Left ventricle myocardium inferior (tissue), 1 donor: ENCODE measurements at regions of chr14 and their contacts with region 1.

Region 1: GRCh38 chr14:102314242-102315011 is 5.1 kb upstream of the ZNF839 start:
- DNase-seq: peak; percentile 87
- H3K4me3 ChIP-seq: peak overlapping the region; percentile 68
- H3K27ac ChIP-seq: peak overlapping the region; percentile 52
- H3K4me1 ChIP-seq: peaks cover 50% of the 10 kb centered on the region
- H3K27me3 ChIP-seq: no peaks in the 10 kb centered on the region
- CTCF ChIP-seq: peak; percentile 99

Region 2: GRCh38 chr14:102235275-102235897 is 79.0 kb before region 1 on chr14:
- intact Hi-C with region 1: loop called (anchors 5 kb)
- DNase-seq: peak; percentile 88
- H3K4me3 ChIP-seq: peak overlapping the region; percentile 52
- H3K27ac ChIP-seq: peak overlapping the region; percentile 17
- H3K4me1 ChIP-seq: peaks cover 7% of the 10 kb centered on the region
- H3K27me3 ChIP-seq: no peaks in the 10 kb centered on the region
- CTCF ChIP-seq: peak; percentile 91

Region 3: DNA sequence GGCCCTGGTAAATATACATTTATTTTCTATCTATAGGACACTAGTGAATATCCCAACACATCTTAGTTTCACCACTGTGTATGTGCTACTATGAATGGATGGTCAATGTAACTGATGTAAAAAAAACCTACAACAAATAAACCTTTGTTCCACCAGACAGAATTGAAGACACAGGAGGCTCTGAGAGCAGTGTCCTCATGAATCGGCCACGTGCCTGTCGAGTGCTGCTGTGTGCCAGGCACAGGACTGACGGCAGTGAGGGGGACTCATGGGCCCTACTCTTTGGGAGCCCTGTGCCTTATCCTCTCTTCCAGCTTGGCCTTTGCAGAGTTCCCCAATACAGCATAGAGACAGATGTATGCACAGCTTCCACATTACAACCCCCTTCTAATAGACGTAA is 30.1 kb after region 1 on chr14:
- intact Hi-C with region 1: no loop called
- DNase-seq: no peak
- H3K4me3 ChIP-seq: no peak overlapping the region
- H3K27ac ChIP-seq: no peak overlapping the region
- H3K4me1 ChIP-seq: no peaks in the 10 kb centered on the region
- H3K27me3 ChIP-seq: no peaks in the 10 kb centered on the region
- CTCF ChIP-seq: no peak

Region 4: DNA sequence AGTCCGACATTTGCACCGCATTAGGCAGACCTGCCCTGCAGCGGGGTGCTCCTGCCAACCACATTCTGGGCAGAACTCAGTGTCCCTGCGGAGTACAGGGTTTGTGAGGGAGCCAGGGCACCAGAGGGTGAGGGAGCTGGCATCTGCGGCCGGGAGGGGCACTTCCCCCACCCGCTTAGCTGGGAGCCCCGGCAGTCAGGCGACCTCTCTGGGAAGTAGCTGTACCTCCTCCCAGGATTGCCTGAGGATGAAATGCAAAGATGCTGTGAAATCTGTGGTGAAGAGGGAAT is 136.6 kb after region 1 on chr14:
- intact Hi-C with region 1: no loop called
- DNase-seq: peak; percentile 44
- H3K4me3 ChIP-seq: no peak overlapping the region
- H3K27ac ChIP-seq: peak overlapping the region; percentile 84
- H3K4me1 ChIP-seq: peaks cover 16% of the 10 kb centered on the region
- H3K27me3 ChIP-seq: no peaks in the 10 kb centered on the region
- CTCF ChIP-seq: no peak